Calu3 (cell line): ENCODE measurements at regions of chr18 and their contacts with region 1.

Region 1: GRCh38 chr18:3623769-3624545 is 174.0 kb downstream of the TGIF1 start:
- DNase-seq: peak; percentile 88
- H3K4me3 Mint-ChIP-seq: peak overlapping the region; percentile 63
- H3K27ac Mint-ChIP-seq: peak overlapping the region; percentile 98
- H3K4me1 Mint-ChIP-seq: peaks cover 81% of the 10 kb centered on the region
- H3K27me3 Mint-ChIP-seq: no peaks in the 10 kb centered on the region
- CTCF ChIP-seq: no peak

Region 2: GRCh38 chr18:3652380-3653262 is 28.7 kb after region 1 on chr18:
- CTCF ChIA-PET with region 1: interaction called, 5 read pairs
- intact Hi-C with region 1: loop called (anchors 1 kb)
- DNase-seq: peak; percentile 90
- H3K4me3 Mint-ChIP-seq: peak overlapping the region; percentile 67
- H3K27ac Mint-ChIP-seq: peak overlapping the region; percentile 100
- H3K4me1 Mint-ChIP-seq: peaks cover 69% of the 10 kb centered on the region
- H3K27me3 Mint-ChIP-seq: peaks cover 12% of the 10 kb centered on the region
- CTCF ChIP-seq: no peak

Region 3: DNA sequence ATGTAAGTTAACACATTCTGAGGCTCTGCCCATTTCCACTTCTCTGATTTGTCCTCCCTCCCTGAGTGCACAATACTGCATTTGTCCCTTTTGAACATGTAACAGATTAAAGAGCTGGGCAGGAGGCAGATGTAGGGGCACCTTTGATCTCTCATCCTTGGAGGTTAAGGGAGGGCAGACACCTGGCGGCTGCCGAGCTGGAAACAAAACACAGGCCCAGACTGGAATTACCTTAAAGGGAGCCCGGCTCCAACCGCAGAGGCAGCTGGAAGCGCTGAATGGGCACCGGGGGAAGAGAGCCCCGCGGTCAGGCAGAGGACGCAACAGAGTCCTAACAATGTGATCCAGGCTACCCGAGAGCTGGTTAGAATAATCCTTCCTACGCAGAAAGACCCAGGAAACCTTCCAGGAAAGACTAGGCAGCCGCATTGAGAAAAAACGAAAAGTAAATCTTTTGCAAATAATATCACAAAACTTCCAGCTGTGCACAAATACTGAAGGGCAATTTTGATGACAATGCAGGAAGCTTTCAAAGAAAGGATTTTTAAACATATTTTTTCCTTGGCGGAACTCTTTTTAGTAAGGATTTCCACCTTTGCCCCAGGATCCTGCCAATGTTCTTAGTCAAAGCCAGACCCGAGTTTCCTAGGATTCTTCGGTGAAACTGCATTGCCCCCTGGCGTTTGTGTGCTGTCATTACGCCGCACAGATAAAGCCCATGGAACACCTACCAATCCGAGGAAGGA is 42.0 kb after region 1 on chr18:
- CTCF ChIA-PET with region 1: interaction called, 26 read pairs
- intact Hi-C with region 1: loop called (anchors 2 kb)
- DNase-seq: peak; percentile 88
- H3K4me3 Mint-ChIP-seq: peak overlapping the region; percentile 55
- H3K27ac Mint-ChIP-seq: peak overlapping the region; percentile 83
- H3K4me1 Mint-ChIP-seq: peaks cover 40% of the 10 kb centered on the region
- H3K27me3 Mint-ChIP-seq: no peaks in the 10 kb centered on the region
- CTCF ChIP-seq: peak; percentile 93